Transverse colon (tissue), 4 donors: ENCODE measurements at regions of chr11 and their contacts with region 1.

Region 1: GRCh38 chr11:83628622-83629355 is 342.6 kb upstream of the CCDC90B start:
- DNase-seq: no peak
- H3K4me3 ChIP-seq: no peak overlapping the region
- H3K27ac ChIP-seq: no peak overlapping the region
- H3K4me1 ChIP-seq: no peaks in the 10 kb centered on the region
- H3K27me3 ChIP-seq: no peaks in the 10 kb centered on the region
- CTCF ChIP-seq: no peak
- EP300 ChIP-seq: no peak
- POLR2A ChIP-seq: no peak

Region 2: DNA sequence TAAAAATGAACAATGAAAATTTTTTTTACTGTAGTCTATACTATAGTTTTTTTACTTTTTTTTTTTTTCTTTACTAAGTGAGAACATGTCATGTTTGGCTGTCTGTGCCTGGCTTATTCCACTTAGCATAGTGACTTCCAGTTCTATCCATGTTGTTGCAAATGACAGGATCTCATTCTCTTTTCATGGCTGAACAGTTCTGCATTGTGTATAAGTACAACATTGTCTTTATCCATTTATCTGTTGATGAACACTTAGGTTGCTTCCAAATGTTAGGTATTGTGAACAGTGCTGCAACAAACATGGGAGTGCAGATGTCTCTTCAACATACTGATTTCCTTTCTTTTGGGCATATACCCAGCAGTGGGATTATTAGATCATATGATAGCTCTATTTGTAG is 254.5 kb before region 1 on chr11:
- in situ Hi-C with region 1: no loop called
- intact Hi-C with region 1: no loop called
- DNase-seq: no peak
- H3K4me3 ChIP-seq: no peak overlapping the region
- H3K27ac ChIP-seq: no peak overlapping the region
- H3K4me1 ChIP-seq: no peaks in the 10 kb centered on the region
- H3K27me3 ChIP-seq: no peaks in the 10 kb centered on the region
- CTCF ChIP-seq: no peak
- EP300 ChIP-seq: no peak
- POLR2A ChIP-seq: no peak

Region 3: DNA sequence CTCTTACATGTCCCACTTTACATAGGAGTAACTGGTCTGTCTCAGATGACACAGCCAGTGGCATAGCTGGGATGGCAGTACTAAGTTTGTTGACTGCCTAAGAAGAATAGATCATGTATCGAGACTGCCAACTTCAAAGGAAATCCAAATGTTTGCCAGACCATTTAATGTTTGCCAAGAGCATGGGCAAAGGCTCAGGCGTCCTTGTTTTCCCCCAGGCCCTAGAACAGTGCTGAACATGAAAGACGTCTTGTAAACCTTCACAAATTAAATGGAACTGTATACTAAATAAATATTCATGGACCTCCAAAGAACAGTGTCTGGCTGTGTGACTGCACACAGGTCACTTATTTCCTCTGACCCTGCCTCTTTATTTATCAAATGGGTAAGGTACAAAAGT is 107.9 kb before region 1 on chr11:
- in situ Hi-C with region 1: no loop called
- intact Hi-C with region 1: no loop called
- DNase-seq: no peak
- H3K4me3 ChIP-seq: no peak overlapping the region
- H3K27ac ChIP-seq: no peak overlapping the region
- H3K4me1 ChIP-seq: no peaks in the 10 kb centered on the region
- H3K27me3 ChIP-seq: no peaks in the 10 kb centered on the region
- CTCF ChIP-seq: no peak
- EP300 ChIP-seq: no peak
- POLR2A ChIP-seq: no peak

Region 4: GRCh38 chr11:84532364-84532763 is 903.6 kb after region 1 on chr11:
- in situ Hi-C with region 1: no loop called
- intact Hi-C with region 1: loop called (anchors 5 kb)
- DNase-seq: no peak
- H3K4me3 ChIP-seq: no peak overlapping the region
- H3K27ac ChIP-seq: no peak overlapping the region
- H3K4me1 ChIP-seq: no peaks in the 10 kb centered on the region
- H3K27me3 ChIP-seq: no peaks in the 10 kb centered on the region
- CTCF ChIP-seq: no peak
- EP300 ChIP-seq: no peak
- POLR2A ChIP-seq: no peak